Dorsolateral prefrontal cortex (tissue), 120 donors: ENCODE measurements at regions of chr22 and their contacts with region 1.

Region 1: GRCh38 chr22:42376711-42377554 is 55.3 kb downstream of the NFAM1 start:
- DNase-seq: peak in 1 of 10 donors; percentile 42
- H3K4me3 ChIP-seq: no peak overlapping the region
- H3K27ac ChIP-seq: no peak overlapping the region
- H3K27me3 ChIP-seq: no peaks in the 10 kb centered on the region
- CTCF ChIP-seq: no peak

Region 2: GRCh38 chr22:42432020-42432596 is 55.2 kb after region 1 on chr22 and contains the start of gene NFAM1:
- intact Hi-C with region 1: loop called in 1 of 2 experiments (anchors 2 kb)
- DNase-seq: peak in 1 of 10 donors; percentile 10
- H3K4me3 ChIP-seq: peak within 1 kb of the TSS in 40 of 59 donors; percentile 1 to 50 (median 31)
- H3K27ac ChIP-seq: peak within 1 kb of the TSS in 31 of 59 donors; percentile 2 to 76 (median 40)
- H3K27me3 ChIP-seq: no peaks in the 10 kb centered on the region
- CTCF ChIP-seq: no peak
- total RNA-seq, gene NFAM1: 0.44 to 5.1 (median 1.6) TPM